Ovary (tissue), 10 donors: ENCODE measurements at regions of chr2 and their contacts with region 1.

Region 1: GRCh38 chr2:207166039-207166348 is 246 bp upstream of the KLF7 start:
- DNase-seq: peak; percentile 98 to 99 (median 99)
- H3K4me3 ChIP-seq: peak overlapping the region; percentile 94
- H3K27ac ChIP-seq: peak overlapping the region; percentile 100
- H3K4me1 ChIP-seq: peaks cover 7% of the 10 kb centered on the region
- H3K27me3 ChIP-seq: no peaks in the 10 kb centered on the region
- CTCF ChIP-seq: no peak
- EP300 ChIP-seq: no peak
- POLR2A ChIP-seq: no peak

Region 2: DNA sequence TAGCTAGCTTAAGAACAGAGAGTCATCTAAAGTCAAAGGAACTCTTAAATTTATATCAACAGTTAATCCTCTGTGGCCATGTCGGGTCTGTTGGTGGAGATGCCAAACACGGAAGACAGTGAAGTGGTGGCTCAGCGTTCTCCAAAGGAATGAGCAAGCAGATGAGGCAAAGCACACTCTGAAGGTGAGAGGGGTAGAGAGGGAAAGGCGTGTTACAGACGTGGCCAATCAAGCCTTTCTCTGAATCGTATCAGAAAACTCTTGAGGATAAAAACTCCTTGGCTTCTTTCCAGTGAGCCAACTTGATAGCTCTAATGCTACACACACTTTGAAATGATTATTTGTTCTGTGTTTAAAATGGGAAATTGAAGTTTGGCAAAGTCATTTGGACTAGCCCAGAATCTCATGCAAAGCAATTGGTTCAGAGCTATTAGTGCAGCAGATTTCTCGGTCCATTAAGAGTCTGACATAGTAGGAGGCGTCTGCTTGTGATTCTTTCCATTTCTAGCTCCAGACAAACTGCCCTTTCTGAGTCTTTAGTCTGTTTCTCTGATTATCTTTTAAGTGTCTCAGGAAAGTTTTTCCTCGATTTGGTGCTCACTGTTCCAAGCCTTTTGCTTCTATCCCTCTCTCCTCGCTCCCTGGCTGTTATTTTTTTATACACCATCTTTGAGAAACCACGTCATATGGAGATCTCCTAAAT is 284.1 kb before region 1 on chr2:
- intact Hi-C with region 1: no loop called
- DNase-seq: no peak
- H3K4me3 ChIP-seq: no peak overlapping the region
- H3K27ac ChIP-seq: no peak overlapping the region
- H3K4me1 ChIP-seq: peaks cover 3% of the 10 kb centered on the region
- H3K27me3 ChIP-seq: no peaks in the 10 kb centered on the region
- CTCF ChIP-seq: no peak
- EP300 ChIP-seq: no peak
- POLR2A ChIP-seq: no peak

Region 3: DNA sequence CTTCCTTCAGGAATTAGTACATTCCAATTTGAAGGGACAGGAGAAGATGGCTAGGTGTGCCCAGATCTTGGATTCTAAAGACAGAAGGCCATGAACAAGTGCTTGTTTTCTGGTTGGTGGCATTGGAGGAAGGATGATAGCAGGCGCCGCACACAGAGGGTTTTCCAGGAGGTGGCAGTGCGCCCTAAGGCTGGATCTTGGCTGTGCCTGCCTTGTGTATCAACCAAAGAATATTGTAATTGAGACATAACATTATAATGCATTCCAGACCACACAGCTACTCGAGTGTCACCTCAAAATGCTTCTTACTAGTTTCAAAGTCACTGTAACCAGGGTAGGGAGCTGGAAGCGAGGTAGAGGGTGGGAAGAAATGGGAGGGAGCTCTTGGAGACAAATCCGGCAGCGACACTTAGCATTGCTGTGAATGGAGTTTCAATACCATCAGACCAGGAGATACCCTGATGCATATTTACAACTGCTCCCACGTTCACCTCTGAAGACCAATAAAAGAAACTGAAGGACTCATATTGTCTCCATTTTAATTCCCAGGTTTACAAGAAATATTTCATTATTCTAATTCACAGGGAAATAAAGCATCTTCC is 184.2 kb before region 1 on chr2:
- intact Hi-C with region 1: loop called in 1 of 4 experiments (anchors 10 kb)
- DNase-seq: peak; percentile 40 to 79 (median 70)
- H3K4me3 ChIP-seq: no peak overlapping the region
- H3K27ac ChIP-seq: no peak overlapping the region
- H3K4me1 ChIP-seq: no peaks in the 10 kb centered on the region
- H3K27me3 ChIP-seq: no peaks in the 10 kb centered on the region
- CTCF ChIP-seq: peak; percentile 22 to 52 (median 36)
- EP300 ChIP-seq: no peak
- POLR2A ChIP-seq: no peak

Region 4: GRCh38 chr2:207078186-207078798 is 87.7 kb before region 1 on chr2:
- intact Hi-C with region 1: loop called in 1 of 4 experiments (anchors 5 kb)
- DNase-seq: no peak
- H3K4me3 ChIP-seq: no peak overlapping the region
- H3K27ac ChIP-seq: no peak overlapping the region
- H3K4me1 ChIP-seq: peaks cover 12% of the 10 kb centered on the region
- H3K27me3 ChIP-seq: no peaks in the 10 kb centered on the region
- CTCF ChIP-seq: no peak
- EP300 ChIP-seq: no peak
- POLR2A ChIP-seq: no peak

Region 5: DNA sequence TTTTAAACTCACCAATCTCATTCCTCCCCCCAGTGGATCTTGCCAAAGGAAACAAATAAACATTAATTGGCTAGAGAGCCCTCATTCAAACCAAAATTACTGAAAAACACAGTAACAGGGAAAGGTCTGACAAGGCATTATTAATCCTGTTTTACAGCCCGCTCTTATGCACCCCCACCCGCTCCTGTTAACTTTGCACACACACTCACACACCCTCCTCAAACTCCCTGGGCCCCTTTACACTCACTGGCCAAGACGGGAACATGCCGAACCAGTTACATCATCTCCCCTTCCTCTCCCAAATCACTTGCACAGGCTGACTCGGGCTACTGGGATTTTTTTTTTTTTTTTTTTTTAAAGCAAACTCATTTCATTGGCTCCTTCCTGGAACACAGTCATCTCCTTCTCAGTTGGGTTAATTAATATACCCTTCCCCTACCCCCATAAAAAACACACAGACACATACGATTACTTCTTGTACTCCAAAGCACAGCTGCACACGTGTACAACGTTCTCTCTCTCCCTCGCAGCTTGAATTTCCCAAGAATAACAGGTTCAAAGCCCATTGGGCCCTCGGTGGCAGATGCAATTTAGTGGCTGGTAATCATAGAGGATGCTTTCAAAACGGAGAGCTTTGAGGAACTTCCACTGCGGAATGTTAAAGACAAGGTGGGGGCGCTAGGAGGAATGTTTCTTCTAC is 32.0 kb before region 1 on chr2:
- intact Hi-C with region 1: loop called in 2 of 4 experiments (anchors 1 to 5 kb)
- DNase-seq: peak; percentile 72 to 90 (median 79)
- H3K4me3 ChIP-seq: no peak overlapping the region
- H3K27ac ChIP-seq: peak overlapping the region in 1 of 2 donors; percentile 0
- H3K4me1 ChIP-seq: peaks cover 26% of the 10 kb centered on the region
- H3K27me3 ChIP-seq: no peaks in the 10 kb centered on the region
- CTCF ChIP-seq: no peak
- EP300 ChIP-seq: peak; percentile 7
- POLR2A ChIP-seq: no peak

Region 6: GRCh38 chr2:207258263-207258991 is 92.4 kb after region 1 on chr2:
- intact Hi-C with region 1: loop called in 1 of 4 experiments (anchors 5 kb)
- DNase-seq: peak; percentile 63 to 86 (median 77)
- H3K4me3 ChIP-seq: no peak overlapping the region
- H3K27ac ChIP-seq: no peak overlapping the region
- H3K4me1 ChIP-seq: peaks cover 9% of the 10 kb centered on the region
- H3K27me3 ChIP-seq: no peaks in the 10 kb centered on the region
- CTCF ChIP-seq: no peak
- EP300 ChIP-seq: peak; percentile 38
- POLR2A ChIP-seq: no peak

Region 7: DNA sequence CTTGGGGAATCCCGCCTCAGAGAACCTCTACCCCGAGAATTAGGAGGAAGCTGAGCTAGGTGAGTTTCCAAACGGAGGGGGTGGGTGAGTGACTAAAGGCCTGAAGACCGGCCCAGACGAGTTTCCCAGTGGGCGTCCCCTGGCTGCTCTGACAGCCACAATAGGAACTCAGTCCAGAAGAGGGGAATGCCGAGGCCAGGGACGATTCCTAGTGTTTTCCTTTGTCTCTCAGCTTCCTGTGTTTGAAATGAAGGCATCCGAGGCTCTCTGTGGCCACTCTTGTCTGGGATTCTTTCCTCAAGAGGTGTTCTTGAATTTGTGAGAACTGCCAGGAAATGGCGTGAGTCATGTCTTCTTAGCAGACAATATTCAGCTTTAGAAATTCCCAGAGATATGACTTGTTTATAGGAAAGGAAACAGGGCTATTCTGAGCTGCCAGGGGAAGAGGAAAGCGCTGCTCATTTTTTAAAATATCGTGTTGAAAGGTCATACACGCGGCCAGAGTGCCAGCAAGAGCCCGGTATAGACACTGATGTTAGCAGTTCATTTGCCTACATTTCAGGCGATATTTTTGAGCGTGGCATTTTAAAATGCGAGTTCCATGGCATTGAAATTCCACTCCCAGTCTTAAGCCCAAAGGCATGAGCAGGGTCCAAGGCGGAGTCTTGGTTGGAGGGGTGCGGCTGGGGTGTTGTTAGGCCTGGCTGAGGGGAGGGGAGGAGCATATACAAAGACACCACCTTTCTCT is 168.8 kb after region 1 on chr2:
- intact Hi-C with region 1: loop called in 1 of 4 experiments (anchors 10 kb)
- DNase-seq: peak; percentile 47 to 75 (median 60)
- H3K4me3 ChIP-seq: peak overlapping the region; percentile 10
- H3K27ac ChIP-seq: peak overlapping the region; percentile 73 to 80
- H3K4me1 ChIP-seq: peaks cover 2% of the 10 kb centered on the region
- H3K27me3 ChIP-seq: no peaks in the 10 kb centered on the region
- CTCF ChIP-seq: no peak
- EP300 ChIP-seq: peak; percentile 51
- POLR2A ChIP-seq: no peak